ENCODE measurements at regions of chr20 and their contacts with region 1.

Region 1: DNA sequence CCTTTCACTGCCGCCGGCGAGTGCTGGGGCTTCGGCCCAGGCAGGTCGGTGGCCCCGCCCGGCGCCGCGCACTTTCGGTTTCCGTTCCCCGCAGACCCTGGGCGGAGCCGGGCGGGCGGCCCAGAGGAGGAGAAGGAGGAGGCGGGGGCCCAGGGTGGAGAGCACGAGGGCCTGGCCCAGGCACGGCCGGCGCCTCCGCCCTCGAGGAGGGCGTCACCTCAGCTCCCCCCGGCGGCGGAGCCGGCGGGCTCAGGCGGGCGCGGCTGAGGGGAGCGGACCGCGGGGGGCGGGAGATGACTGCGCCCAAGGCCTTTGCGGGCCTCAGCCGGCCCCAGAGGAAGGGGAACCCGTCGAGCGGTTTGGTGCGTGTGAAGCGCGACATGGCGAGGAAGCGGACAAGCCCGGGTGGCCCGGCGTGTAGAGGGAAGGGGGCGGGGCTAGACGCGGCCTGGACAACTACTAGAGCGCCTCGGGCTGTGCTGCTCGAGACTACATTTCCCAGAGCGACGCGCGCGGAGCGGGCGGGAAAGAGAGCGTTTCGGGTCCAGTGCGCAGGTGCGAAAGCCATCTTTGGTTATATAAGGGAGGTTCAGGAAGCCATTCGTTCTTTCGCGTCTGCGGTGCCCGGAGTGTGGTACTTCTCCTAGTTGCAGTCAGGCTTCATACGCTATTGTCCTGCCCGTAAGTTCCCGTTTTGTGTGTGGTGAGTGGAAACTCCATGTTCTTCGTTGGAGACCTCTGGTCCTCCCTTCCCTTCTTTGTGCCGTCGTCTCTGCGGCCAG is at the start of gene ZNFX1:
- DNase-seq: peak; percentile 99
- H3K4me3 Mint-ChIP-seq: peak within 1 kb of the TSS; percentile 81
- H3K27ac Mint-ChIP-seq: peak within 1 kb of the TSS; percentile 96
- H3K4me1 Mint-ChIP-seq: peaks cover 50% of the 10 kb centered on the region
- H3K27me3 Mint-ChIP-seq: no peaks in the 10 kb centered on the region
- CTCF ChIP-seq: no peak
- total RNA-seq, gene ZNFX1: 24.3 and 26.8 TPM in 2 replicates

Region 2: DNA sequence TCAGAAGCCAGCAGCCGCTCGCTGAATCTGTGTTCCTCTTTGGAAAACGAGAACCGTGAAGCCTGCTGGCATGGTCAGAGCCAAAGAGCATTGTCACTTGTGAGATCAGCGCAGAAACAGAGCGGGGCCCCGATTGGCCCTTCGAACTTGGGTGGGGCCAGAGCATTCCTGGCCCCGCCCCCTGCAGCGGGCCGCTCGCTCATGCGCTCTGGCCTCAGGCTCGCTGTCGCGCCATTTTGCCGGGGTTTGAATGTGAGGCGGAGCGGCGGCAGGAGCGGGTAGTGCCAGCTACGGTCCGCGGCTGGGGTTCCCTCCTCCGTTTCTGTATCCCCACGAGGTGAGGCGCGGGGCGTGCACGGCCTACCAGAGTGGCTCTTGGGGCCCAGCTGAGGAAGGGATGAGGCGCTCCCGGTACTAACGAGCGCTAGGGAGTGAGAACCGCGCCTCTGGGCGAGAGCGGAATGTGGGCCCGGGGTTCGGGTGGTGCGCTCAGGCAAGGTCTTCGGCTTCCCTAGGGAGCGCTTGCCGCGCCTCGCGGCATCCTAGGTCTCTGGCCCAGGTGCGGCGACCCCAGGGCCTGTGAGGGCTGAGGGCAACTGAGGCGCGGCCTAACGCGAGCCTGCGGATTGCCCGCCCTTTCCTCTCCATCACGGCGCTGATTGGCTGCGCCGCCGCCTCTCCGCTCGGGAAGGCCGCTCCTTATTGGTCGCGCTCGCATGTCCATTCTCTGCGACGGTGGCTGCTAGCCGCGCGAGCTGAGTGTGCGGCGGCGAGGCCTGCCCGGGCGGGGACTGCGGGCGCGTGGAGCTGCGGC is 231.9 kb before region 1 on chr20 and contains the start of gene CSE1L:
- CTCF ChIA-PET with region 1: no interaction called
- POLR2A ChIA-PET with region 1: interaction called, 29 read pairs
- intact Hi-C with region 1: no loop called
- DNase-seq: peak; percentile 94
- H3K4me3 Mint-ChIP-seq: peak within 1 kb of the TSS; percentile 95
- H3K27ac Mint-ChIP-seq: peak within 1 kb of the TSS; percentile 97
- H3K4me1 Mint-ChIP-seq: peaks cover 24% of the 10 kb centered on the region
- H3K27me3 Mint-ChIP-seq: no peaks in the 10 kb centered on the region
- CTCF ChIP-seq: no peak
- total RNA-seq, gene CSE1L: 65.2 and 101 TPM in 2 replicates

Region 3: GRCh38 chr20:49186535-49187329 is 91.5 kb before region 1 on chr20:
- CTCF ChIA-PET with region 1: interaction called, 7 read pairs
- POLR2A ChIA-PET with region 1: interaction called, 34 read pairs
- intact Hi-C with region 1: no loop called
- DNase-seq: peak; percentile 68
- H3K4me3 Mint-ChIP-seq: peak overlapping the region; percentile 83
- H3K27ac Mint-ChIP-seq: peak overlapping the region; percentile 75
- H3K4me1 Mint-ChIP-seq: peaks cover 6% of the 10 kb centered on the region
- H3K27me3 Mint-ChIP-seq: no peaks in the 10 kb centered on the region
- CTCF ChIP-seq: no peak

Region 4: GRCh38 chr20:49256261-49256660 is 22.0 kb before region 1 on chr20:
- CTCF ChIA-PET with region 1: interaction called, 4 read pairs
- POLR2A ChIA-PET with region 1: interaction called, 11 read pairs
- intact Hi-C with region 1: no loop called
- DNase-seq: no peak
- H3K4me3 Mint-ChIP-seq: no peak overlapping the region
- H3K27ac Mint-ChIP-seq: no peak overlapping the region
- H3K4me1 Mint-ChIP-seq: no peaks in the 10 kb centered on the region
- H3K27me3 Mint-ChIP-seq: no peaks in the 10 kb centered on the region
- CTCF ChIP-seq: no peak

Region 5: GRCh38 chr20:49323622-49324238 is 45.5 kb after region 1 on chr20:
- CTCF ChIA-PET with region 1: interaction called, 5 read pairs
- POLR2A ChIA-PET with region 1: interaction called, 26 read pairs
- intact Hi-C with region 1: loop called (anchors 5 kb)
- DNase-seq: peak; percentile 76
- H3K4me3 Mint-ChIP-seq: no peak overlapping the region
- H3K27ac Mint-ChIP-seq: no peak overlapping the region
- H3K4me1 Mint-ChIP-seq: no peaks in the 10 kb centered on the region
- H3K27me3 Mint-ChIP-seq: peaks cover 7% of the 10 kb centered on the region
- CTCF ChIP-seq: peak; percentile 35

Region 6: GRCh38 chr20:49482621-49483017 is 204.4 kb after region 1 on chr20 and contains the start of gene KCNB1:
- CTCF ChIA-PET with region 1: no interaction called
- POLR2A ChIA-PET with region 1: no interaction called
- intact Hi-C with region 1: no loop called
- DNase-seq: peak; percentile 24
- H3K4me3 Mint-ChIP-seq: peak within 1 kb of the TSS; percentile 69
- H3K27ac Mint-ChIP-seq: no peak within 1 kb of the TSS
- H3K4me1 Mint-ChIP-seq: peaks cover 16% of the 10 kb centered on the region
- H3K27me3 Mint-ChIP-seq: no peaks in the 10 kb centered on the region
- CTCF ChIP-seq: no peak
- total RNA-seq, gene KCNB1: 2.8 and 3.0 TPM in 2 replicates

Measured in MCF 10A (cell line).